CD4-positive, alpha-beta memory T cell (primary cell): ENCODE measurements at regions of chr20 and their contacts with region 1.

Region 1: GRCh38 chr20:41693136-41693979 is 75.2 kb upstream of the CHD6 start:
- DNase-seq: peak; percentile 83 to 87 (median 85)
- H3K4me3 ChIP-seq: peak overlapping the region; percentile 75 to 76
- H3K4me3 Mint-ChIP-seq: peak overlapping the region; percentile 86 to 97 (median 94)
- H3K27ac ChIP-seq: peak overlapping the region; percentile 85
- H3K27ac Mint-ChIP-seq: peak overlapping the region; percentile 82 to 98 (median 95)
- H3K4me1 ChIP-seq: peaks cover 12% of the 10 kb centered on the region
- H3K4me1 Mint-ChIP-seq: peaks cover 7 to 23% (median 16%) of the 10 kb centered on the region in 4 donors
- H3K27me3 ChIP-seq: no peaks in the 10 kb centered on the region
- H3K27me3 Mint-ChIP-seq: peaks cover 4% of the 10 kb centered on the region in 2 donors

Region 2: GRCh38 chr20:41317536-41318270 is 375.7 kb before region 1 on chr20 and contains the start of gene ZHX3:
- CTCF ChIA-PET with region 1: no interaction called
- POLR2A ChIA-PET with region 1: no interaction called
- intact Hi-C with region 1: loop called (anchors 1 kb)
- DNase-seq: peak; percentile 91 to 97 (median 95)
- H3K4me3 ChIP-seq: peak within 1 kb of the TSS; percentile 21 to 74
- H3K4me3 Mint-ChIP-seq: peak within 1 kb of the TSS; percentile 85 to 90 (median 87)
- H3K27ac ChIP-seq: peak within 1 kb of the TSS; percentile 48
- H3K27ac Mint-ChIP-seq: peak within 1 kb of the TSS; percentile 79 to 90 (median 84)
- H3K4me1 ChIP-seq: peaks cover 16% of the 10 kb centered on the region
- H3K4me1 Mint-ChIP-seq: peaks cover 7 to 27% (median 18%) of the 10 kb centered on the region in 4 donors
- H3K27me3 ChIP-seq: no peaks in the 10 kb centered on the region
- H3K27me3 Mint-ChIP-seq: no peaks in the 10 kb centered on the region
- total RNA-seq, gene ZHX3: 5.2 to 6.3 TPM

Region 3: GRCh38 chr20:41428285-41428684 is 265.1 kb before region 1 on chr20:
- CTCF ChIA-PET with region 1: no interaction called
- POLR2A ChIA-PET with region 1: no interaction called
- intact Hi-C with region 1: loop called (anchors 2 kb)
- DNase-seq: peak; percentile 6 to 47 (median 22)
- H3K4me3 ChIP-seq: no peak overlapping the region
- H3K4me3 Mint-ChIP-seq: peak overlapping the region in 2 of 8 donors; percentile 1 to 12
- H3K27ac ChIP-seq: no peak overlapping the region
- H3K27ac Mint-ChIP-seq: peak overlapping the region; percentile 10 to 88 (median 38)
- H3K4me1 ChIP-seq: peaks cover 18% of the 10 kb centered on the region
- H3K4me1 Mint-ChIP-seq: peaks cover 10 to 28% (median 15%) of the 10 kb centered on the region in 4 donors
- H3K27me3 ChIP-seq: no peaks in the 10 kb centered on the region
- H3K27me3 Mint-ChIP-seq: no peaks in the 10 kb centered on the region

Region 4: DNA sequence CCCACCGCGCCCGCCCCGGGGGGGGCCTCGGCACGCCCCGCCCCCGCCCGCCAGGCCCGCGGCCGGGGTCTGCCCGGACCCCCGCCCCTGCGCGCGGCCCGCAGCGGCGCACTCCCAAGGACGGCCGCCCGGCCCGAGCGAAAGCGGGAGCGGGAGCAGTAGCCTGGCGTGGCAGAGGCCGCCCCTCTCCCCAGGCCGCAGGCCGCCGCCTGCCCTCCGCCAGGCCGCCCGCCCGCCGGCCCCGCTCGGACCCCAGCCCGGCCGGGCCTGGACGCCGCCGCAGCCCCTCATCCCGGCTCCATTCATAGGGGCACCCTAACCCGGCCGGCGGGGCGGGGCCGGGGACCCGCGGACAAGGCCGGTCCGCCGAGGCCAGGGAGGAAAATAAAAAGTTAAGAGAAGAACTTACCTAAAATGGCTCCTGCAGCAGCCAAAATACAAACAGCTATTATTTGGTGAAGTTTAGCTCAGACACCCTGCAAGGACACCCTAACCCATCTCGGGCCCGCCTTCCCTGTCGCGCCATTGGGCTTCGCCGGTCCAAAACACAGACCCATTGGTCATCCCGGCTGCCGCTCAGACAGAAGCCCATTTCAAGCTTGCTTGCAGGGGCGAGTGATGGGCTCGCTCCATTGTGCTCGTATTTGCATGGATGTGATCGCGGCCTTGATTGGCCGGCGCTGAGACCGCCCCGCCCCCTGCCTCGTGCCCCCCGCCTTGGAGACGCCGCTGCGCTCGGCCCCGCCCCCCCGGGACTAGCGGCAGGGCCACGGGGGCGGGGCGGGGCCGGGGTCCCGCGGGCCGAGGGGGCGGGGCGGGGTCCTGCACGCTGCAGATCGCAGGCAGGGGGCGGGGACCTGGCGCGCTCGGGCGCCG is 75.2 kb before region 1 on chr20 and contains the start of gene CHD6:
- CTCF ChIA-PET with region 1: interaction called, 6 read pairs
- POLR2A ChIA-PET with region 1: interaction called, 78 read pairs
- intact Hi-C with region 1: loop called (anchors 1 kb)
- DNase-seq: peak; percentile 99 to 100 (median 100)
- H3K4me3 ChIP-seq: peak within 1 kb of the TSS; percentile 7 to 69
- H3K4me3 Mint-ChIP-seq: peak within 1 kb of the TSS; percentile 92 to 95 (median 94)
- H3K27ac ChIP-seq: peak within 1 kb of the TSS; percentile 41
- H3K27ac Mint-ChIP-seq: peak within 1 kb of the TSS; percentile 88 to 96 (median 91)
- H3K4me1 ChIP-seq: peaks cover 41% of the 10 kb centered on the region
- H3K4me1 Mint-ChIP-seq: peaks cover 33 to 51% (median 38%) of the 10 kb centered on the region in 4 donors
- H3K27me3 ChIP-seq: no peaks in the 10 kb centered on the region
- H3K27me3 Mint-ChIP-seq: no peaks in the 10 kb centered on the region
- total RNA-seq, gene CHD6: 93.2 to 96.8 TPM

Region 5: DNA sequence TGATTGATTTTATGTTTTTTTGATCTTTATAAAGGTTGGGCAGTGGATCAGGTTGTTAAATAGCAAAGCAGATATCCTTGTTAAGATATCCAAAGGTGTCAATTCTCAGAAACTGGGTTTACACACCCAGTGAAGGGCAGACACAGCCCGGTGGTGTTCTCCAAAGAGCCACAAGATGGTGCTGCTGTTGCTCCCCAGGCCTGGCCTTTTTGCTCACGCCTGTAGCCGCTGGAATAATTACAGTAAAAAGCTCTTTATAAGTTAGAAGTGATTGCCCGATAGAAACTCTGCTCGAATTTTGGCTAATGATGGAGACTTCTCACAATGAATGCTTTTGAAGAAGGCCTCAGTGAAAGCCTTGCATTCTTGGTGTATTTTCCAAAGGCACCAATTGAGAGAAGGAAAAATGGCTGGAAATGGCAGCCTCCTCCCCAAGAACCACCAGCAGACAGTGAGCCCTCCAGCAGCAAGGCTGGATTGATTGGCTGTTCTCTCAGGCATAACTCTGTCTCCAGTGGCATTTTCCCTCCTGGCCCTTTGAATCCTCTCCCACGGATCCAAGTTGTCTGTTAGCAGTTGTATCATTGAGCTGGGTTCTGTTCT is 45.3 kb after region 1 on chr20:
- CTCF ChIA-PET with region 1: interaction called, 10 read pairs
- POLR2A ChIA-PET with region 1: no interaction called
- intact Hi-C with region 1: no loop called
- DNase-seq: peak in 3 of 5 donors; percentile 11 to 25 (median 18)
- H3K4me3 ChIP-seq: no peak overlapping the region
- H3K4me3 Mint-ChIP-seq: no peak overlapping the region
- H3K27ac ChIP-seq: no peak overlapping the region
- H3K27ac Mint-ChIP-seq: no peak overlapping the region
- H3K4me1 ChIP-seq: no peaks in the 10 kb centered on the region
- H3K4me1 Mint-ChIP-seq: peaks cover 0 to 2% (median 0%) of the 10 kb centered on the region in 4 donors
- H3K27me3 ChIP-seq: no peaks in the 10 kb centered on the region
- H3K27me3 Mint-ChIP-seq: peaks cover 0 to 2% of the 10 kb centered on the region in 2 donors